PC-3 (cell line): ENCODE measurements at regions of chr2 and their contacts with region 1.

Region 1: DNA sequence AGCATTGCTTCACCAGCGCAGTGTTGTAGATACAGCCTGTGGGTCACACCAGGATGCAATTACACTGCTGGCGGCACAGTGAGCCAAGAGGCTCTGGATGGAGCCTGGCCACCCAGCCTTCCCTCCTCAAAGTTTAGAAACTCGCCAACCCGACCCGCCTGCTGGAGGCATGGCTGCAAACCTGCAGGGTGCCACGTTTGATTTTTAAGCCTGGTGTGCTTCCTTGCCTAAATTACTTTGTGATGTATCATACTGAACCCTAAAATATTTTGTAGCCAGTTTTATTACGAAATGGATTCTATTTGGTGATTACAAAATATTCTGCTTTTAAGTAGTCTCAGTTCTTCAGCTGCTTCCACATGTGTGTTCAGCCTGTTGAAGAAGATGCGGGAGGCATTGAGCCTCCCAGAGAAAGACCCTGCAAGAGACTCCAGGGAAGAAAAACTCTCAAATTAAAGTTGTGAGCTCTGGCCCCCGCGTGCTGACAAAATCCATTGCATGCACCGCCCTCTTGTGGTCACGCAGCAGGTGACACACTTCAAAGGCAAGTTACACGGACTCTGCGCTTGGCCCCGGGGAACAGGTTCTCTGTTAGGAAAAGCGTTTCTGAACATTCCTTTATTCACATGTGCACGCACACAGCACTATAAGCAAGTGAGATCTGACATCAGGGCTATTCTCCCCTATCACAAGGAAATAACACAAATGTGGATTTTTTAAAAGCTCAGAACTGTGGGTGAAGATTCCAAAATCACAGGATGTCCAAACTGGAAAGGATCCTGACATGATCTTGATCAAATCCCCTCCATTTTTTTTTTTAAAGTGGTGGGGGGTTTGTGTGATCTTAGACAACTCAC is 63.0 kb upstream of the TWIST2 start:
- DNase-seq: peak; percentile 69
- ATAC-seq: peak; percentile 89
- H3K4me3 ChIP-seq: no peak overlapping the region
- H3K27ac ChIP-seq: no peak overlapping the region
- H3K4me1 ChIP-seq: no peaks in the 10 kb centered on the region
- H3K27me3 ChIP-seq: no peaks in the 10 kb centered on the region
- CTCF ChIP-seq: peak; percentile 92

Region 2: DNA sequence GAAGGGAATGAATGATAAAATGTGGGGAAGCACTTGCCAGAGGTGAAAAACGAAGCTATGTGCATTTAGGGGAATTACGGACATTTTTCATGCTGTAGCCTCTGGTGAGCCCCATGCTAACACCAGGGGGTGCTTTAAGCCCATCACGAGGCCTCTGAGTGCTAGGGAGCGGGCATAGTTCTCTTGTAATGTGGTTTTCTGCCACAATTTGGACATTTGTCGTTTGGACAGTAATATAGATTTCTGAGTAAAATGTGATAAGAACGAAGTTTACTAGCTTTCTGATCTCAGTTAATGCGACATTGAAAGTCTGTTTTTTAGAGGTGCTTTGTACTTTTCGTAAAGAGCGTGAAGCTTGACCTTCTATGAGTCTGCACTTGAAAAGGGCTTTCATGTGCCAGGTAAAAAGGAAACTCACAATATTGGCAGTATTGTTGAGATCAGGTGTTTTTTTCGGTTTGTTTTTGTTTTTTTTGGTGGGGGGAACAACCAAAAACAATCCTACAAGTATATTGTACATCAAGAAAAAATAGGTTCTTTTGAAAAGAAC is 414.0 kb before region 1 on chr2:
- CTCF ChIA-PET with region 1: interaction called, 5 read pairs
- POLR2A ChIA-PET with region 1: no interaction called
- intact Hi-C with region 1: loop called (anchors 1 kb)
- DNase-seq: peak; percentile 71
- ATAC-seq: peak; percentile 99
- H3K4me3 ChIP-seq: no peak overlapping the region
- H3K27ac ChIP-seq: no peak overlapping the region
- H3K4me1 ChIP-seq: no peaks in the 10 kb centered on the region
- H3K27me3 ChIP-seq: no peaks in the 10 kb centered on the region
- CTCF ChIP-seq: peak; percentile 93

Region 3: DNA sequence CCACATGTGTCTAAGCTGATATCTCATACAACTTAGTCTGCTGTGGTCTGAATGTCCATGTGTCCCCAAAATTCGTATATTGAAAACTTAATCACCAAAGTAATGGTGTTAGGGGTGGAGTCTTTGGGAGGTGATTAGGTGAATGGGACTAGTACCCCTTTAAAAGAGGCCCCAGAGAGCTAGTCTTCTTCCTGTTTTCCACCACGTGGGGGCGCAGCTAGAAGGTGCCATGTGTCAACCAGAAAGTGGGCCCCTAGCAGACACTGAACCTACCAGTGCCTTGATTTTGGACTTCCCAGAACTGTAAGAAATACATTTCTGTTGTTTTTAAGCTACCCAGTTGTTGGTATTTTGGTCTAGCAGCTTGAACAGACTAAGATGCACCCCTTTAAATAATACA is 271.6 kb before region 1 on chr2:
- CTCF ChIA-PET with region 1: interaction called, 5 read pairs
- POLR2A ChIA-PET with region 1: no interaction called
- intact Hi-C with region 1: loop called (anchors 2 kb)
- DNase-seq: peak; percentile 68
- ATAC-seq: peak; percentile 87; the same call in 1 of the 2 replicates
- H3K4me3 ChIP-seq: no peak overlapping the region
- H3K27ac ChIP-seq: no peak overlapping the region
- H3K4me1 ChIP-seq: peaks cover 5% of the 10 kb centered on the region; the same call in 1 of the 2 replicates
- H3K27me3 ChIP-seq: no peaks in the 10 kb centered on the region
- CTCF ChIP-seq: peak; percentile 84

Region 4: DNA sequence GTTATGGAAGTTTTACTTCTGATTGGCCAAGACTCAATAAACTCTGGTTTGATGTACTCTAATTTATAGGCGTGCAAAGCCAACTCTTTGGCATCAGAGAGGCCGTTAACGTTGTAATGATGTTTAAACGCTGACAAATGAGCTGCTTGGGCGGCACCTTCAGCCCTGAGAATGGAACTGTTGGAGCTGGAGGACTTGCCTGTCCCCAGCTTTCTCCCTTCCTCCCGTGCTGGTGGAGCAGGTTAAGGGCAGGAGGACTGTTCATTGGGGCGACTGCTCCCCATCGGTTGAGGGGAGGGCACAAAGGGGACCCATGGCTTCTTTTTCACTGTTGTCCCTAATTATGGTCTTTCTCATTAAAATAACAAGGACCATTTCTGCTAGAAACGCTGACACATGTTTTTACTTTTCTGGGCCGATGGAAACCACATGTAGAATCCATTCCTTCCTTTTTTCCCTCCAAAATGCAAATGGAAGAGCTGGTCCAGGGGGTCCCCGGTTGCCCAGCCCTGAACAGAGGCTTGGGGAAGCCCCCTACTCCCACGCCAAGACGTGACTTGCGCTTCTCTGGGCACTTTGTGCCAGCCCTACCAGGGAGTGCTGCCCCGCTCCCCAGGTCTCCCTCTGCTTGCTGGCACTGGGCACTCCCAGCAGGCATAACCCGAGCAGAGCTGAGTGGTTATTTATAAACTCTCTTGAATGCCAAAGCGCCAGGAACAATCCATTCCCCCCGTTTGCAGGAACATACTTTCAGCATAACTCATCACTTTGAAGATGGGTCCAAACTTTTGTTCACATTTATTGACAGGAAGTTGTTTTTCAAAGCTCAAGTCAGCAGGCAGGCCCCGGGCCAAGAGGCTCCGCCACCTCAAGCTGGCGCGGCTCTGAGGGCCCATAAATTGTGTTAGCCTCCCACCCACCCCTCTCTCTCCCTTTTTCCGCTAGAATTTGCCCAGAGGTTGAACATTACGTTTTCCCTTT is 188.0 kb before region 1 on chr2:
- CTCF ChIA-PET with region 1: no interaction called
- POLR2A ChIA-PET with region 1: no interaction called
- intact Hi-C with region 1: loop called (anchors 10 kb)
- DNase-seq: peak; percentile 94
- ATAC-seq: peak; percentile 98
- H3K4me3 ChIP-seq: no peak overlapping the region; the same call in 1 of the 2 replicates
- H3K27ac ChIP-seq: peak overlapping the region; percentile 55
- H3K4me1 ChIP-seq: peaks cover 18% of the 10 kb centered on the region
- H3K27me3 ChIP-seq: no peaks in the 10 kb centered on the region
- CTCF ChIP-seq: no peak

Region 5: DNA sequence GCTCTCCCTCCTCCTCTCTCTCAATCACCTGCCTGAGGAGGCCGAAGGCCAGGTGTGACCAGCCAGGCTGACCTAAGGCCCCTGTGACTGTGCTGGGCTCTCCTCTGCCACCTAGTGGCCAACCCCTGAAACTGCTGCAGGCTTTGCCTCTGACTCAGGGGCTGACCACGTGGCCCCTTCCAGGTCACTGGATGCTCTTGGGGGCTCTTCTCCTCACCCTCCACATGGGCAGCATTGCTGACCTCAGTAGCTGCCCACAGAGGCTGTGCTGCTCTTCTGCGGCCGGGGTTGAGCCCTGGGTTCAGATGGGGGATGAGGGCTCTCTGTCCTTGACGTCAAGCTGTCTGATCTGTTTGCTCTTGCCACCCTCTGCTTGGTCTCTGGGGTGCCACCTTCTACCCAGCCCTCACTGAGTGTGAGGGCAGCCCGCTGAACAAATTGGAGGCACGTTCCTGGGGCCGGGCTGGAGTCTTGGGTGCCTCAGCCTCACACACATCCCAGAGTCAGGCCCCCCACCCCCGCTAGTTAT is 185.7 kb after region 1 on chr2:
- CTCF ChIA-PET with region 1: interaction called, 3 read pairs
- POLR2A ChIA-PET with region 1: no interaction called
- intact Hi-C with region 1: loop called (anchors 2 kb)
- DNase-seq: peak; percentile 74
- ATAC-seq: peak; percentile 54
- H3K4me3 ChIP-seq: no peak overlapping the region
- H3K27ac ChIP-seq: no peak overlapping the region
- H3K4me1 ChIP-seq: peaks cover 24% of the 10 kb centered on the region
- H3K27me3 ChIP-seq: no peaks in the 10 kb centered on the region
- CTCF ChIP-seq: peak; percentile 95